ENCODE measurements at regions of chr2 and their contacts with region 1.

Region 1: GRCh38 chr2:199985625-199986207 is 30.3 kb downstream of the MAIP1 start:
- DNase-seq: no peak
- H3K4me3 ChIP-seq: no peak overlapping the region
- CTCF ChIP-seq: peak; percentile 70

Region 2: DNA sequence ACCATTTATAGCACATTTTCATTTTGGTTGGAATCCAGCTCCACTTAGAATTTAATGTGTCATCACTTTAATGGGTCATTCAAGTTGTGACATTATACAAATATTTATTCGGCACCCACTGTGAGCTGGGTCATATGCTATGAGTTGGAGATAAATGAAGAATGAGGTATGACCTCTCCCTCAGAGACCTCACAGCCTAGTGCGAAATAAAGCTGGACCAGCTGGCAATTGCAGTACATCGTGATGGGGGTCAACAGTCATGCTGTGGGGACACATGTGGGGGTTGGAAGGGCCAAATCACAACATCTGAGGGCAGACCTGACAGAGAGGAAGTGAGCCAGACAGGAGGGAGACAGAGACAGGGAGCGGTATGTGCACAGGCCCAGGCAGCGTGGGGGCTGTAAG is 145.0 kb after region 1 on chr2:
- CTCF ChIA-PET with region 1: interaction called, 12 read pairs
- POLR2A ChIA-PET with region 1: no interaction called
- DNase-seq: no peak
- H3K4me3 ChIP-seq: no peak overlapping the region
- CTCF ChIP-seq: no peak

Region 3: DNA sequence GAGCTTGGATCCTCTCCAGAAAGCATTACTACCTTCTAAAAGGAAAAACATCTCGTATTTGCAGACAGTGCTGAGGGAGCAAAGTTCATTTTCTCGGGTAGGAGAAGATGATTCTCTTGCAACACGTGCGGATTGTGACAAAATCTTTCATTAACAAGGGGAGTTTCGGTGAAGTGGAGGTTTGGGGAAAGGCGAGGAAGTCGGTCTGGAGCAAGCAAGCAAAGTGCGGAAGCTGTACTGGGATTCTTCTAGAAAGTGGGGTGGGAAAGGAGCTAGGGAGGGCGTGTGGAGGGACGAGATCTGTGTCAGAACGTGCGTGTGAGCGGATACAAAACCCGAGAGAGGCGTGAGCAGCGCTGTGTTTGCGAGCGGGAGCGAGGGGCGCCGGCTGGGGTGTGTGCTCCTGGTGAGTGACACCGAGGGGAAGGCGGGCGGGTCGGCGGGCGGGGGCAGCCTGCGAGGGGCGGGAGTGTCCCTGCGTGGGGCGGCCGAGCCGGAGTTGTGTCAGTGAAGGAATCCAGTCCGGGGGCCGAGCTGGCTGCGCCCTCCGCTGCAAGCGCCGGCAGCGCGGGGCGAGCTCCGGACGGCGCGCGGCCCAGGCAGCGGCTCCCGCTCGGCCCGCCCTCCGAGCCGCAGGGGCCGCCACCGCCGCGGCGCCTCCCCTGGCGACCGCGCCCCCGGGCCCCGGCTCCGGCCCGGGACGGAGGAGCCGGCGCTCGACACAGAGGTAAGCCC is 320.6 kb after region 1 on chr2 and contains the start of gene SPATS2L:
- CTCF ChIA-PET with region 1: interaction called, 26 read pairs
- POLR2A ChIA-PET with region 1: no interaction called
- DNase-seq: no peak
- H3K4me3 ChIP-seq: peak within 1 kb of the TSS; percentile 77
- CTCF ChIP-seq: no peak

Region 4: GRCh38 chr2:200378652-200379290 is 393.1 kb after region 1 on chr2:
- CTCF ChIA-PET with region 1: interaction called, 11 read pairs
- POLR2A ChIA-PET with region 1: no interaction called
- DNase-seq: no peak
- H3K4me3 ChIP-seq: no peak overlapping the region
- CTCF ChIP-seq: no peak

Region 5: GRCh38 chr2:200471324-200471848 is 485.7 kb after region 1 on chr2:
- CTCF ChIA-PET with region 1: interaction called, 242 read pairs
- POLR2A ChIA-PET with region 1: no interaction called
- DNase-seq: no peak
- H3K4me3 ChIP-seq: no peak overlapping the region
- CTCF ChIP-seq: peak; percentile 52

Measured in AG04449 (cell line).